Caco-2 (cell line): ENCODE measurements at regions of chr1 and their contacts with region 1.

Region 1: DNA sequence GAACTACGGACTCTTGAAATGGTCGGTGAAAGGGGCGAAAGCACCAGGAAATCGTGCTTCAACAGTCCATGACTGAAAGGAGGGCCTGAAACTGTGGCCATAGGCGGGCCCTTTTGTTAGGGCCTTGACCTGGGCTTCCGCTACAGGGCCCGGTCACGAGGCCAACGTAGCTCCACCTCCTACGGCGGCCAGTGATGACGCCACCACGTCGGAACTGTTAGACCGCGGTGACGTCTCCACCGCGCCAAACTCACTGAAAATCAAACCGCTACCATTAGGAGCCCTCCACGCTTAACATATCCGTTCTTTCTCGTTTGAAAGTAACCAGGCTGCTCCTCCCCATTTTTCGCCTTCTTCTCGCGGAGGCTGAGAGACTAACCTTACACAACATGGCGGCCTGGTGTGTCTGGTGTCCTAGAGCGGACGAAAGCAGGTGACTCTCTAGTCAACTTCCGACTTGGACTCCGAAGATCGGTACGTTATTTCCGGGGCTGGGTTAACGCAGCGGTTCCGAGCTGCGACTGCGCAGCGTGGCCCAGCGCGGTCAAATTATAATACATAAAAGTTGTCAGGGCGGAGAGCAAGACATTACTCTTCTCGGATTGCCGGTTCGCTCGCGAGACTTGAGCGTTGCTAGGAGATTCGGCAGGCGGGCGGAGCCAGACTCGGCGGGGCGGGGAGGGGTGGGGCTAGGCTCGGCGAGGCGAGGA is 376 bp upstream of the CACYBP start:
- DNase-seq: peak; percentile 95 to 98
- H3K4me3 ChIP-seq: peak overlapping the region; percentile 100
- H3K4me3 Mint-ChIP-seq: no peak overlapping the region
- H3K27ac Mint-ChIP-seq: no peak overlapping the region
- H3K4me1 ChIP-seq: peaks cover 9% of the 10 kb centered on the region; the same call in 1 of the 2 replicates
- H3K4me1 Mint-ChIP-seq: no peaks in the 10 kb centered on the region
- H3K27me3 ChIP-seq: no peaks in the 10 kb centered on the region
- H3K27me3 Mint-ChIP-seq: no peaks in the 10 kb centered on the region
- CTCF ChIP-seq: no peak

Region 2: GRCh38 chr1:174022080-174022975 is 977.0 kb before region 1 on chr1 and contains the start of gene RC3H1:
- CTCF ChIA-PET with region 1: no interaction called
- POLR2A ChIA-PET with region 1: no interaction called
- intact Hi-C with region 1: loop called (anchors 10 kb)
- DNase-seq: peak; percentile 88
- H3K4me3 ChIP-seq: peak within 1 kb of the TSS; percentile 83
- H3K4me3 Mint-ChIP-seq: peak within 1 kb of the TSS; percentile 84
- H3K27ac Mint-ChIP-seq: peak within 1 kb of the TSS; percentile 97
- H3K4me1 ChIP-seq: peaks cover 14% of the 10 kb centered on the region
- H3K4me1 Mint-ChIP-seq: peaks cover 7% of the 10 kb centered on the region
- H3K27me3 ChIP-seq: no peaks in the 10 kb centered on the region
- H3K27me3 Mint-ChIP-seq: no peaks in the 10 kb centered on the region
- CTCF ChIP-seq: no peak
- total RNA-seq, gene RC3H1: 29.2 and 36.3 TPM in 2 replicates

Region 3: GRCh38 chr1:174262349-174263241 is 736.8 kb before region 1 on chr1:
- CTCF ChIA-PET with region 1: no interaction called
- POLR2A ChIA-PET with region 1: no interaction called
- intact Hi-C with region 1: loop called (anchors 10 kb)
- DNase-seq: peak in 1 of 2 experiments; percentile 49
- H3K4me3 ChIP-seq: no peak overlapping the region
- H3K4me3 Mint-ChIP-seq: no peak overlapping the region
- H3K27ac Mint-ChIP-seq: no peak overlapping the region
- H3K4me1 ChIP-seq: 0 out of 2 replicates have a peak, but pooled peaks cover 6% of the 10 kb centered on the region
- H3K4me1 Mint-ChIP-seq: peaks cover 9% of the 10 kb centered on the region
- H3K27me3 ChIP-seq: no peaks in the 10 kb centered on the region; the same call in 1 of the 2 replicates
- H3K27me3 Mint-ChIP-seq: no peaks in the 10 kb centered on the region
- CTCF ChIP-seq: peak; percentile 58 to 70

Region 4: DNA sequence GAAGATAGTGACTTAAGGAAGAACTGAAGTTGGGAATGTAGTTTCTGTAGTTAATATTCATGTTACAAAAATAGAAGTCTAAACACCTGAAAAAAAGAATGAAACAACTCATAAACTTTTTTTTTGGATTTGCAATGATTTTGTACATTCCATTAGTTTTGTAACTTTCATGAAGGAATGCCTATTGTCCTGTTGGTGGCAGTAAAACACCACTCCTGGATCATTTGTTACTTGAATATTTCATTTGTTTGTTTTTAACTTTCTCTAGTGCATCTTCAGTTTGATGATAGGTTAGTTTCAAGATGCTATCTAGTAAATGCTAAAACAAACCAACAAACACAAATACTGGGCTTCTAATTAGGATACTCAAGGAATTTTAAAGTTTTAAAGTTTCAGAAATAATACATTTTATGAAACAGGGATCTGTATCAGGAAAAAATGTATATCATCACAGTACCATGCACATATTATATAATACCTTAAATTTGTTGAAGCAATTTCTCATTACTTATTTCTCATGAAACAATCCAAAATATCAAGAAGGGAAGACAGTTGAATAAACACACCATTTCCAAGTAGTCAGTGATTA is 229.3 kb before region 1 on chr1:
- CTCF ChIA-PET with region 1: interaction called, 12 read pairs
- POLR2A ChIA-PET with region 1: no interaction called
- intact Hi-C with region 1: loop called (anchors 1 kb)
- DNase-seq: peak in 1 of 2 experiments; percentile 19
- H3K4me3 ChIP-seq: no peak overlapping the region
- H3K4me3 Mint-ChIP-seq: no peak overlapping the region
- H3K27ac Mint-ChIP-seq: no peak overlapping the region
- H3K4me1 ChIP-seq: peaks cover 23% of the 10 kb centered on the region
- H3K4me1 Mint-ChIP-seq: peaks cover 34% of the 10 kb centered on the region
- H3K27me3 ChIP-seq: no peaks in the 10 kb centered on the region
- H3K27me3 Mint-ChIP-seq: no peaks in the 10 kb centered on the region
- CTCF ChIP-seq: peak; percentile 49 to 67

Region 5: GRCh38 chr1:174883409-174883808 is 116.0 kb before region 1 on chr1:
- CTCF ChIA-PET with region 1: interaction called, 18 read pairs
- POLR2A ChIA-PET with region 1: interaction called, 4 read pairs
- intact Hi-C with region 1: loop called (anchors 1 kb)
- DNase-seq: peak in 1 of 2 experiments; percentile 35
- H3K4me3 ChIP-seq: no peak overlapping the region
- H3K4me3 Mint-ChIP-seq: no peak overlapping the region
- H3K27ac Mint-ChIP-seq: no peak overlapping the region
- H3K4me1 ChIP-seq: no peaks in the 10 kb centered on the region
- H3K4me1 Mint-ChIP-seq: no peaks in the 10 kb centered on the region
- H3K27me3 ChIP-seq: no peaks in the 10 kb centered on the region
- H3K27me3 Mint-ChIP-seq: no peaks in the 10 kb centered on the region
- CTCF ChIP-seq: no peak

Region 6: DNA sequence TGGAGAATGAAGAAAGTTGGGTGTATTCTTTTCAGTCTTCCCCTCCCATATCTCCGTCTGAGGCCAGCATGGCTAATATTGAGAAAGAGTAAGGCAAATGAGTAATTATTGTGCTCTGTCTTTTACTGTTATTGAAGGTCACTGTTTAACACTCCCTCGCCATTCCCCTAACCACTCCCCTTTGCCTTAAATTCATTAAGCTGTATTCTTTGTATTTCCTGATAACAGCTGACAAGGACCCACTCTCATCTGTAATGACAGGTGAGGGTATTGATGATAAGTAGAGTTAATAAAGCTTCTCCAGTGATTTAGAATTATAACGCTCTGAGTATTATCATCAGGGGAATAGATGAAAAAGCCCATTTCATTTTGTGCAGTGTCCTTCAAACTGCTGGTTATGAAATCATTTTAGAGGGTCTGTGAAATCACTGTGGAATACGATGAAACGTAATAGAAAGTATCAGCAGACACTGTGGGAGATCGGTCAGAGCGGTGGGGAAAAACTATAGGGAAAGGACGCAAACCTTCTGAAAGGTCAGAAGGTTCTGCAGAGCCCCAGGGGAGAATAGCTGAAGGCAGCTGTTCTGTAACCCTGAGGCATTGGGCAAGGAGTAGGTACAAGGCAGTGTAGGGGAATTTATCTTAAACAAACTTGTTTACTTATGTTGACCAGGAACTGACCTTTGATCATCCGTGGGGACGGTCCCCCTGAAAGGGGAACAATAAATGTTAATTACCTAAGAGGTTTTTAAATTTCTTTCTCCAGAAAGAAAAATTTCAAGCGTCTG is 45.9 kb before region 1 on chr1:
- CTCF ChIA-PET with region 1: no interaction called
- POLR2A ChIA-PET with region 1: interaction called, 4 read pairs
- intact Hi-C with region 1: loop called (anchors 1 kb)
- DNase-seq: peak; percentile 69 to 76
- H3K4me3 ChIP-seq: peak overlapping the region; percentile 13; the same call in 1 of the 2 replicates
- H3K4me3 Mint-ChIP-seq: peak overlapping the region; percentile 41
- H3K27ac Mint-ChIP-seq: peak overlapping the region; percentile 0
- H3K4me1 ChIP-seq: peaks cover 26% of the 10 kb centered on the region
- H3K4me1 Mint-ChIP-seq: peaks cover 15% of the 10 kb centered on the region
- H3K27me3 ChIP-seq: no peaks in the 10 kb centered on the region
- H3K27me3 Mint-ChIP-seq: no peaks in the 10 kb centered on the region
- CTCF ChIP-seq: no peak

Region 7: DNA sequence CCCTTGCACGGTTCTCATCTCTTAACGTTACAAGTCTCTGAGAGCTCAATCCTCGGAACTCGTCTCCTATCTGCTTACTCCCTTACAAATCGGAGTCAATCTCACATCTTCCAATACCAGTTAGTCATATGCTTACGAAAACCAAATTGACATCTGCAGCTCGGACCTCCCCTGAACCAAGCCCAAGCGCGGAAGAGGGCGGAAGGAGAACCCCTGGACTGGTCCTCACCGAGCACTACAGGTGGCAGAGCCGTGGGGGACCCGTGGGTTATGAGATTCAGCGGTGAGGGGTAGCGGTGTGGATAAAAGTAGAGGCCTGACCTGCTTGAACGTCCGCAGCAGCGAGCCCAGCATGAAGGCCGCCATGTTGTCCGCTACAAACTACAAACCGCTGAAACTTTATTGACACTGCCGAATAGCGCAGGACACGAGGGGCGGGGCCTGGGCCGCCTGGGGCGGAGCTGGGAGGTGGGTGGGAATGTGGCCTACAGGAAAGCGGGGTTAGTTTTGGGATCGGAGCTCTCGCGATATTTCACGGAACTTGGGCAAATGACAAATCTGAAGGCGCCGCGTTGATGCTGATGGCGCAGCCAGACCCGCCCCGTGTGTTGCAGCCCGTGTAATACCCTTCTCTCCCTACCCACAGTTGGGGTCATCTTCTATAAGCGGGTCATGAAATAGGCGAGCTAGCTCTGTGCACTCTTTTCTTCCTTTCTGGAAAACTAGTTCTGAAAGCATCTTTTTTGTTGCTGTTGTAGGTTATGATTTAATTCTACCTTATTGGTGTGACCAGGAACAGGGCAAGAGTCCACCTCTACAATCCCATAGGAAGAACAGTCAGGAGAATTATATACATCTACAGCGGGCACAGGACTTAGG is 23.9 kb after region 1 on chr1 and contains the start of gene MRPS14:
- CTCF ChIA-PET with region 1: interaction called, 6 read pairs
- POLR2A ChIA-PET with region 1: interaction called, 37 read pairs
- intact Hi-C with region 1: loop called (anchors 1 kb)
- DNase-seq: peak; percentile 98 to 99
- H3K4me3 ChIP-seq: peak within 1 kb of the TSS; percentile 66
- H3K4me3 Mint-ChIP-seq: peak within 1 kb of the TSS; percentile 88
- H3K27ac Mint-ChIP-seq: peak within 1 kb of the TSS; percentile 75
- H3K4me1 ChIP-seq: no peaks in the 10 kb centered on the region
- H3K4me1 Mint-ChIP-seq: peaks cover 18% of the 10 kb centered on the region
- H3K27me3 ChIP-seq: no peaks in the 10 kb centered on the region
- H3K27me3 Mint-ChIP-seq: no peaks in the 10 kb centered on the region
- CTCF ChIP-seq: no peak
- total RNA-seq, gene MRPS14: 35.3 and 38.1 TPM in 2 replicates